HEK293 (cell line): ENCODE measurements at regions of chr9 and their contacts with region 1.

Region 1: DNA sequence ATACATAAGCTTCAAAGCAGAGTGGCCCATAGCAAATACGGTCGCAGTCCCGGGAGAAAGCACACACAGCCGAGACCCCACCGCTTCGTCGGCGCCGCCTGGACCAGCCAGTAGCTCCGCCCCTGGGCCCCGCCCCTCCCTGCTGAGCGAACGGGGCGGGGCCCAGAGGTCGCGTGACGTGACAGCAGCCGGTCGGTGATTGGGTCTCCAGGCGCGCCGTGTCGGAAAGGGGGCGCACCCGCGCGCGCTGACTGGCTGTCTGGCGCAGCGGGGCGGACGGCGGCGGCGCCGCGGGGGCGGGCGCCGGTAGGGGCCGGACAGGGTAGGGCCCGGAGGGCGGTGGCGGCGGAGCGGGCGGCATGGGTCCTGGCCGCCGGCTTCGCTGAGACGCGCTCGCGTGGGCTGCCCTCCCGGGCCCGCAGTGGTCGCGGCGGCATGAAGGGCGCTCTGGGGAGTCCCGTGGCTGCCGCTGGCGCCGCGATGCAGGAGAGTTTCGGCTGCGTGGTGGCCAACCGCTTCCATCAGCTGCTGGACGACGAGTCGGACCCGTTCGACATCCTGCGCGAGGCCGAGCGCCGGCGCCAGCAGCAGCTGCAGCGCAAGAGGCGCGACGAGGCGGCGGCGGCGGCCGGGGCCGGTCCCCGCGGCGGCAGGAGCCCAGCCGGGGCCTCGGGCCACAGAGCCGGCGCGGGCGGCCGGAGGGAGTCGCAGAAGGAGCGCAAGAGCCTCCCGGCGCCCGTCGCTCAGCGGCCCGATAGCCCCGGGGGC is at the start of gene HABP4:
- H3K4me3 ChIP-seq: peak within 1 kb of the TSS; percentile 82
- H3K27ac ChIP-seq: peak within 1 kb of the TSS; percentile 43; the same call in 1 of the 2 replicates
- H3K4me1 ChIP-seq: no peaks in the 10 kb centered on the region
- CTCF ChIP-seq: no peak

Region 2: GRCh38 chr9:96418074-96418809 is 31.8 kb before region 1 on chr9 and contains the start of gene ZNF367:
- CTCF ChIA-PET with region 1: interaction called, 3 read pairs
- POLR2A ChIA-PET with region 1: interaction called, 10 read pairs
- H3K4me3 ChIP-seq: peak within 1 kb of the TSS; percentile 86
- H3K27ac ChIP-seq: peak within 1 kb of the TSS; percentile 99
- H3K4me1 ChIP-seq: peaks cover 5% of the 10 kb centered on the region; the same call in 1 of the 2 replicates
- CTCF ChIP-seq: peak; percentile 52; the same call in 1 of the 2 replicates

Region 3: DNA sequence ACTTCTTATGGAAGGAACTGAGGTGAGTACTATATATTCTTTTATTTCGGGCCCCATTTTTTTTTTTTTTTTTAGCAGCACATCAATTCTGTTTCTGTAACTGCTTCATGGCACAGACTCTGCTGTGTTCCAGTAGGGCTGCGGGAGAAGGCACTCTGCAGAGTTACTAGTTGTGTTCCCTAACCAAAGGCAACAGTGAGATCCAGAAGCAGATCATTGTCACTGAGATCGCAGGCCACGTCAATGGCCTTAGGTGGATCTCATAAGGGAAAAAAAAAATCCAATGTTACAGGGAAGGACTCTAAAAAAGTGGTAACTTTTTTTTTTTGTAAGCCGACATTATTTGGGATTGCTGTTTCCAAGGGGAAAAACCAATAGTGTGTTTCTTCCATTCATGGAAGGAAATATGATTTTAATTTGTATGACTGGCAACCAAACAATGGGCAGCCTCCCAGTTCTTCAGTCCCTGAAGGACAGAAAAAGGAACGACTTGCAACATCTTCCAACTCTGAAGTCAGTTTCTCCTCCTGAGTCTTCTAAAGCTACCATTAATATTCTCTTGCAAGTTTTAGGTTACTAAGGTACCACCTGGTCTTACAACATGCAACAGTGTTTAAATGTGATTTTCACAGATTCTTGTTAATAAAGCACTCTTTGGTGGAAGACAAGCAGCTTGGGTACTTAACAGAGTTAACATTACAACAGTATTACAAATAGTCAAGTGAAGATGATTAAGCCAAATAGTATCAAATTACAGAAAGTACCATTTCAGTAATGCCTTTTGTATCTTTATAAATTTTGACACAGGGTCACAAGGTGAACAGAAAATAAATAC is 52.7 kb after region 1 on chr9:
- CTCF ChIA-PET with region 1: no interaction called
- POLR2A ChIA-PET with region 1: no interaction called
- H3K4me3 ChIP-seq: no peak overlapping the region
- H3K27ac ChIP-seq: no peak overlapping the region
- H3K4me1 ChIP-seq: no peaks in the 10 kb centered on the region
- CTCF ChIP-seq: no peak